Endothelial cell of umbilical vein (primary cell): ENCODE measurements at regions of chr16 and their contacts with region 1.

Region 1: GRCh38 chr16:23435500-23435899 is 17.5 kb downstream of the COG7 start:
- DNase-seq: peak; percentile 81
- H3K4me3 ChIP-seq: no peak overlapping the region
- H3K27ac ChIP-seq: no peak overlapping the region
- H3K4me1 ChIP-seq: no peaks in the 10 kb centered on the region
- H3K27me3 ChIP-seq: no peaks in the 10 kb centered on the region
- CTCF ChIP-seq: peak; percentile 89 to 96
- POLR2A ChIP-seq: no peak

Region 2: GRCh38 chr16:22898874-22899348 is 536.6 kb before region 1 on chr16:
- CTCF ChIA-PET with region 1: interaction called, 98 read pairs
- POLR2A ChIA-PET with region 1: no interaction called
- dilution Hi-C with region 1: no loop called
- intact Hi-C with region 1: loop called (anchors 1 kb)
- DNase-seq: peak; percentile 74
- H3K4me3 ChIP-seq: no peak overlapping the region
- H3K27ac ChIP-seq: no peak overlapping the region
- H3K4me1 ChIP-seq: peaks cover 6% of the 10 kb centered on the region
- H3K27me3 ChIP-seq: peaks cover 0 to 2% of the 10 kb centered on the region in 2 experiments
- CTCF ChIP-seq: peak; percentile 84 to 91
- POLR2A ChIP-seq: no peak

Region 3: GRCh38 chr16:23081675-23082119 is 353.8 kb before region 1 on chr16:
- CTCF ChIA-PET with region 1: interaction called, 8 read pairs
- POLR2A ChIA-PET with region 1: no interaction called
- dilution Hi-C with region 1: no loop called
- intact Hi-C with region 1: loop called (anchors 5 kb)
- DNase-seq: peak; percentile 75
- H3K4me3 ChIP-seq: no peak overlapping the region
- H3K27ac ChIP-seq: peak overlapping the region; percentile 50
- H3K4me1 ChIP-seq: peaks cover 34% of the 10 kb centered on the region
- H3K27me3 ChIP-seq: no peaks in the 10 kb centered on the region
- CTCF ChIP-seq: no peak
- POLR2A ChIP-seq: no peak

Region 4: GRCh38 chr16:23182460-23183309 is 252.8 kb before region 1 on chr16 and contains the start of gene SCNN1G:
- CTCF ChIA-PET with region 1: interaction called, 371 read pairs
- POLR2A ChIA-PET with region 1: no interaction called
- dilution Hi-C with region 1: no loop called
- intact Hi-C with region 1: loop called (anchors 1 kb)
- DNase-seq: peak; percentile 56
- H3K4me3 ChIP-seq: peak within 1 kb of the TSS in 1 of 3 experiments; percentile 1
- H3K27ac ChIP-seq: no peak within 1 kb of the TSS
- H3K4me1 ChIP-seq: peaks cover 5% of the 10 kb centered on the region
- H3K27me3 ChIP-seq: peaks cover 29 to 30% of the 10 kb centered on the region in 2 experiments
- CTCF ChIP-seq: peak; percentile 86 to 87
- POLR2A ChIP-seq: no peak
- total RNA-seq, gene SCNN1G: not detected in 2 replicates

Region 5: GRCh38 chr16:23330583-23331249 is 104.8 kb before region 1 on chr16:
- CTCF ChIA-PET with region 1: interaction called, 10 read pairs
- POLR2A ChIA-PET with region 1: no interaction called
- dilution Hi-C with region 1: no loop called
- intact Hi-C with region 1: no loop called
- DNase-seq: no peak
- H3K4me3 ChIP-seq: no peak overlapping the region
- H3K27ac ChIP-seq: no peak overlapping the region
- H3K4me1 ChIP-seq: no peaks in the 10 kb centered on the region
- H3K27me3 ChIP-seq: no peaks in the 10 kb centered on the region
- CTCF ChIP-seq: no peak
- POLR2A ChIP-seq: no peak

Region 6: GRCh38 chr16:23403547-23403946 is 32.0 kb before region 1 on chr16:
- CTCF ChIA-PET with region 1: interaction called, 10 read pairs
- POLR2A ChIA-PET with region 1: no interaction called
- dilution Hi-C with region 1: no loop called
- intact Hi-C with region 1: no loop called
- DNase-seq: no peak
- H3K4me3 ChIP-seq: no peak overlapping the region
- H3K27ac ChIP-seq: no peak overlapping the region
- H3K4me1 ChIP-seq: peaks cover 3% of the 10 kb centered on the region
- H3K27me3 ChIP-seq: no peaks in the 10 kb centered on the region
- CTCF ChIP-seq: no peak
- POLR2A ChIP-seq: no peak

Region 7: GRCh38 chr16:23452572-23453337 is 17.3 kb after region 1 on chr16 and contains the start of gene COG7:
- CTCF ChIA-PET with region 1: interaction called, 18 read pairs
- POLR2A ChIA-PET with region 1: no interaction called
- dilution Hi-C with region 1: no loop called
- intact Hi-C with region 1: no loop called
- DNase-seq: peak; percentile 95
- H3K4me3 ChIP-seq: peak within 1 kb of the TSS; percentile 65 to 79 (median 70)
- H3K27ac ChIP-seq: peak within 1 kb of the TSS; percentile 37
- H3K4me1 ChIP-seq: peaks cover 3% of the 10 kb centered on the region
- H3K27me3 ChIP-seq: no peaks in the 10 kb centered on the region
- CTCF ChIP-seq: no peak
- POLR2A ChIP-seq: peak; percentile 22
- total RNA-seq, gene COG7: 20.7 and 24.1 TPM in 2 replicates